ENCODE measurements at regions of chr1 and their contacts with region 1.

Region 1: GRCh38 chr1:36300526-36300925 is 5.6 kb upstream of the SH3D21 start:
- DNase-seq: no peak
- ATAC-seq: peak in 3 of 4 experiments; percentile 54 to 65 (median 56)
- H3K4me3 ChIP-seq: no peak overlapping the region
- H3K4me3 Mint-ChIP-seq: no peak overlapping the region
- H3K27ac ChIP-seq: no peak overlapping the region
- H3K27ac Mint-ChIP-seq: peak overlapping the region; percentile 67 to 74
- H3K4me1 ChIP-seq: peaks cover 0 to under 1% of the 10 kb centered on the region in 2 experiments
- H3K4me1 Mint-ChIP-seq: peaks cover 0 to 21% (median 10%) of the 10 kb centered on the region in 3 donors
- H3K27me3 ChIP-seq: no peaks in the 10 kb centered on the region
- H3K27me3 Mint-ChIP-seq: no peaks in the 10 kb centered on the region

Region 2: DNA sequence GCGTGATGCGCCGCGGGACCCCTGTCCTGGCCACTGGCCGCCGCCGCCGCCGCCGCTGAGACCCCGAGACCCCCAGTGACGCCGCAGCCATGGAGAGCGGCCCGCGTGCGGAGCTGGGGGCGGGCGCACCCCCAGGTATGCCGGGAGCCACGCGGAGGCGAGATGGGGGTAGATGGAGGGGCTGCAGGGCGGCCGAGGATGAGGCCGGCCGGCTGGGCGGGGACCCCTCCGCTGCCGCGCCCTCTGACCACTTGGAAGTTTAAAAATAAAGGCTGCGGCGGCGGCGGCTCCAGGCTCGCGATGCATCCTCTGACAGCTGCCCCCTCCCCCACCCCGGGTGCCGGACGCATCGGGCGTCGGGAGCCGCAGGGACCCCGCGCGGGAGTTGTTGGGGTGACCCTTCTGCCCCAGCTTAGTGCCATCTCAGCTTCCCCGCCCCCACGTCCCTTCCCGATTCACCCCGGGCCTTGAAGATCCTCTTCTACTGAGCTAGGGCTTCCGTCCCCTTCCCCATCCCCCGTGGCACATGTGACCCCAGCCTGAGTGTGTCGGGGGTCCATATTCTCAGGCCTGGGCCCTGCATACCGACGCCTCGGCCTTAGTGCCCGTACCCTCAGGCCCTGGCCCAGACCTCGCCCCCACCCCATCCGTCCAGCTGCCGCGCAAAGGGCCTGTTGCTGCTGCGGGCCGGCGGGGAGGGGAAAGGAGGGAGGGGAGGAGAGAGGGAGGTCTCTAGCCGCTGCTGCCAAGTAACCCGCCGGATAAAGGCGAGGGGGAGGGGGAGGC is 144.0 kb before region 1 on chr1:
- CTCF ChIA-PET with region 1: no interaction called
- POLR2A ChIA-PET with region 1: interaction called in 1 of 2 experiments, 13 read pairs
- DNase-seq: peak in 33 of 35 experiments; percentile 16 to 65 (median 43)
- ATAC-seq: peak; percentile 13 to 28 (median 18)
- H3K4me3 ChIP-seq: peak overlapping the region; percentile 70 to 73
- H3K4me3 Mint-ChIP-seq: peak overlapping the region; percentile 79 to 89 (median 82)
- H3K27ac ChIP-seq: peak overlapping the region; percentile 89
- H3K27ac Mint-ChIP-seq: peak overlapping the region; percentile 97
- H3K4me1 ChIP-seq: peaks cover 47 to 79% of the 10 kb centered on the region in 2 experiments
- H3K4me1 Mint-ChIP-seq: peaks cover 68 to 78% (median 75%) of the 10 kb centered on the region in 3 donors
- H3K27me3 ChIP-seq: no peaks in the 10 kb centered on the region
- H3K27me3 Mint-ChIP-seq: no peaks in the 10 kb centered on the region

Measured in T-cell (primary cell).